ENCODE measurements at regions of chr6 and their contacts with region 1.

Region 1: GRCh38 chr6:129498950-129499842 is 210.8 kb downstream of the ARHGAP18 start:
- DNase-seq: no peak
- ATAC-seq: peak; percentile 20 to 32

Region 2: DNA sequence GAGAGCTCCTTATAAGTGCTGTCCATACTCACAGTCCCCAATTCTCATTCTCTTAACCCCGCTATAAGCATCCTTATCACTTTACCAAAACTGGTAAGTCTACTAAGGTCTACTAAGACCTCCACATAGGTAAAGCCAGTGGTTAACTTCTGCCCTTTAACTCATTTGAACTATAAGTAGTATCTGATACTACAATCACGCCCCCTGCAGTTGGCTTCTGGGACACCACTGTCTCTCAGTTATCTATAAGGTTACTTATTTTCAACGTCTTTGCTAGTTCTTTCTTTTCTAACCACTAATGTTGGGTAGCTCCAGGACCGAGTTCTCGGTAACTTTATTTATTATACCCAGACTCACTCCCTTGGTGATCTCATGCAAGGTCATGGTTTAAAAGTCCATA is 68.2 kb after region 1 on chr6:
- intact Hi-C with region 1: loop called (anchors 5 to 10 kb)
- DNase-seq: no peak
- ATAC-seq: no peak

Region 3: GRCh38 chr6:129575378-129576118 is 76.4 kb after region 1 on chr6:
- intact Hi-C with region 1: loop called (anchors 5 to 10 kb)
- DNase-seq: no peak
- ATAC-seq: peak; percentile 76 to 77

Measured in left cardiac atrium (tissue), 4 donors.